Head of caudate nucleus (tissue), 42 donors: ENCODE measurements at regions of chr13 and their contacts with region 1.

Region 1: GRCh38 chr13:113816946-113817859 is 46.7 kb downstream of the GAS6 start:
- DNase-seq: peak; percentile 56 to 93 (median 82)

Region 2: GRCh38 chr13:113666951-113667701 is 150.1 kb before region 1 on chr13 and contains the start of gene GRK1:
- intact Hi-C with region 1: no loop called
- DNase-seq: peak in 9 of 42 donors; percentile 7 to 38 (median 17)

Region 3: DNA sequence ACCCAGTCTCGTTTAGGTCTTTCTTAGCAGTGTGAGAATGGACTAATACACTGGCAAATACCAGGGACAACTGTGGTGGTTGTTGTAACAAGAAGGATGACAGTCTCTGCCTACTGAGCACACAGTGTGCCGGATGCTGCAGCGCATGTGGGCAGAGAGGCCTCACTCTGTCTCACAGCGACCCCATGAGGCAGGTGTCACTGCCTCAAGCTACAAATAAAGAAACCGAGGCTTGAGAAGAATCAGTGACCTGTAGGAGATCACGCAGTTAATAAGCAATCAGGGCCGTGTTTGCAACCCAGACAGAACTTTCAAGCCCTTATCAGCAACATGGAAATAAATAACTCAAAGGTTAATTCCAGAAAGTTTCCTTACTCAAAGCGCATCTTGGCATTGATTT is 87.2 kb after region 1 on chr13:
- intact Hi-C with region 1: loop called (anchors 10 kb)
- DNase-seq: peak in 38 of 42 donors; percentile 24 to 79 (median 51)

Region 4: DNA sequence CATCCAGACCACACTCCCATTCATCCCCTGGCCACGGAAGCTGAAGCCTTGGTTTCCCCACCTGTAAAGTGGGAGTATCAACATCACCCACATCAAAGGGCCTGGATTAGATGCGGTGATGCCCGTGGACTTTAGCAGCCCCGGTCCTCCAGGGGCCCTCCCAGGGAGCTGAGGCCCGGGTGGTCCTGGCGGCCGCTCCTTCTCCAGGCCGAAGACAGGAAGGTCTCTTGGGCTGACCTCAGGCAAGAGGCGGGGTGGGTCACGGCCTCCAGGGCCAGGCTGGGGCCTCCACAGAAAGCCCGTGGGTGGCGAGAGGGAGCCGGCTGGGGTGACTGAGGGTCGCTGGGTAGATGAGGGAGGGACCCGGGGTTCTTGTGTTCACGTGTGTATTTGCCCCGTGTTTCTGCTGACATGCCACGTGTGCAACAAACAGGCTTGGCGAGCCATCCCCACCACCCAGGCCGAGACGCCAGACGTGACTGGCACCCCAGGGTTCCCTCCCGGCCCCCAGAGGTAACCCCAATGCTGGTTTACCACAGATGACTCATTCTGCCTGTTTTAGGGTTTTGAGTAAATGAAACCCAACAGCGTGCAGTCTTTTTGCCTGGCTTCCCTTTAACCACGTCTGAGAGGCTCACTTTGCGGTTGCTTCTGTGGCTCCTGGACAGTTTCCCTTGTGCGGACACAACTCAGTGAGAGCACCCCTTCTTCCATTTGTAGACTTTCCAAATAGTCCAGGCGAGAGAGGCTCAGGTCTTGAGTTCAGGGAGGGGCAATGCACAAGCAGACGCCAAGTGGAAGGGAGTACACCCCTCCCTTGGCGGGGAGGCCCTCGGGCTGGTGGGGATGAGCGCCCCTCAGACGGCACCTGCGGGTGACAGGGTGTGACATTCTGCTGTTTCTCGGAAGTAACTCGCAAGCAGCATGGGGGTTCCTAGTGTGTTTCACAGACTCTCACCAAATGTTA is 113.8 kb after region 1 on chr13:
- intact Hi-C with region 1: loop called (anchors 10 kb)
- DNase-seq: peak in 12 of 42 donors; percentile 5 to 30 (median 12)